ENCODE measurements at regions of chr10 and their contacts with region 1.

Region 1: DNA sequence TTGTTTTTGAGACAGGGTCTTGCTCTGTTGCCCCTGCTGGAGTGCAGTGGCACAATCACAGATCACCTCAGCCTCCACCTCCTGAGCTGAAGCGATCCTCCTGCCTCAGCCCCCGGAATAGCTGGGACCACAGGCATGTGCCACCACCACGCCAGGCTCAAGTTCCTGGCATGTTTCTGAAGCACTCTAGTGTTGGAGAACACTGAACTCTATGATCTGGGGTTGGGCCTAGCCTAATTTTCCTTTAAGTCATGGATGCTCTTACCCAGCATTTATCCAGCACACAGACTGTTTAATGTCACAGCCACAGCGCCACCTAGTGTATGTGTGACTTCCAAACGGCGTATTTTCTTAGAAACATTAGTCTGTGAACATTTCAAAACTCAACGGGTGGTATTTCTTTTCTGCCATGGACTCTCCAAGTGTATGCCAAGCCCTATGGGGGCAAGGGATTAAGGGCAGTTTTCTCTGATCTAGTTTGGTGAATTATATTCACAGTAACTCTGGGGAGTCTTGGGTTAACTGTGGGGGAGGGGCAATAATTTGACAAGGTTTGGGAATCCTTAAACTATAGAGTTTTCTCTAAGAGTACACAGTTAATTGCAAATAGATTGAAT is 91.8 kb downstream of the CREM start:
- DNase-seq: peak; percentile 78
- H3K4me3 Mint-ChIP-seq: peak overlapping the region; percentile 66
- H3K27ac Mint-ChIP-seq: peak overlapping the region; percentile 97
- H3K4me1 Mint-ChIP-seq: peaks cover 62% of the 10 kb centered on the region
- H3K27me3 Mint-ChIP-seq: no peaks in the 10 kb centered on the region

Region 2: GRCh38 chr10:34994565-34995142 is 223.8 kb before region 1 on chr10:
- intact Hi-C with region 1: loop called (anchors 2 kb)
- DNase-seq: peak; percentile 58
- H3K4me3 Mint-ChIP-seq: no peak overlapping the region
- H3K27ac Mint-ChIP-seq: peak overlapping the region; percentile 28
- H3K4me1 Mint-ChIP-seq: peaks cover 12% of the 10 kb centered on the region
- H3K27me3 Mint-ChIP-seq: no peaks in the 10 kb centered on the region

Region 3: GRCh38 chr10:35153716-35154479 is 64.5 kb before region 1 on chr10:
- intact Hi-C with region 1: loop called (anchors 1 kb)
- DNase-seq: no peak
- H3K4me3 Mint-ChIP-seq: no peak overlapping the region
- H3K27ac Mint-ChIP-seq: no peak overlapping the region
- H3K4me1 Mint-ChIP-seq: peaks cover 40% of the 10 kb centered on the region
- H3K27me3 Mint-ChIP-seq: no peaks in the 10 kb centered on the region

Region 4: GRCh38 chr10:35442028-35442427 is 223.6 kb after region 1 on chr10:
- intact Hi-C with region 1: loop called (anchors 1 kb)
- DNase-seq: no peak
- H3K4me3 Mint-ChIP-seq: no peak overlapping the region
- H3K27ac Mint-ChIP-seq: peak overlapping the region; percentile 87
- H3K4me1 Mint-ChIP-seq: peaks cover 32% of the 10 kb centered on the region
- H3K27me3 Mint-ChIP-seq: no peaks in the 10 kb centered on the region

Region 5: DNA sequence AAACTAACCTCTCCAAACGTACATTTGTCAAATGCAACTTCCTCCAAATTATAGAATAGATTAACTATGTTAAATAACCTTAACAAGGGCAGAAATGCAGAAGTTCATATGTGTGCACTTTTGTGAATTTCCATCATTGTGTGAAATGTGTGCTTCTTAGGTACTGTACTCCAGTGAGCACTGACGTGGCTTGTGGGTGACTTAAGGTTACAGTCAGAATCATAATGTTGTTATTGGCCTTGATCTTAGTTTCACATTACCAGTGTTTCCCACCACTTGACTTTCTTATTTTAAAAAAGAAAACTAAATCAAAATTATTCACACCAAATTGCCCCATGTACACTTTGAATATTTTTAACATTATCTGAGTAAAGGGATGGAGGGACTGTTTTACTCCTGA is 578.7 kb after region 1 on chr10:
- intact Hi-C with region 1: no loop called
- DNase-seq: no peak
- H3K4me3 Mint-ChIP-seq: no peak overlapping the region
- H3K27ac Mint-ChIP-seq: no peak overlapping the region
- H3K4me1 Mint-ChIP-seq: no peaks in the 10 kb centered on the region
- H3K27me3 Mint-ChIP-seq: no peaks in the 10 kb centered on the region